Activated CD4-positive, alpha-beta memory T cell treated with anti-CD3 and anti-CD28 coated beads, Interleukin-2, amount 10 ng/mL, durations not matched to agents 7 days and 5 days (primary cell): ENCODE measurements at regions of chr15 and their contacts with region 1.

Region 1: GRCh38 chr15:85412956-85413854 is 32.8 kb downstream of the AKAP13 start:
- DNase-seq: peak; percentile 84
- H3K4me3 Mint-ChIP-seq: peak overlapping the region; percentile 53
- H3K27ac Mint-ChIP-seq: peak overlapping the region; percentile 86
- H3K4me1 Mint-ChIP-seq: peaks cover 67% of the 10 kb centered on the region
- H3K27me3 Mint-ChIP-seq: no peaks in the 10 kb centered on the region

Region 2: DNA sequence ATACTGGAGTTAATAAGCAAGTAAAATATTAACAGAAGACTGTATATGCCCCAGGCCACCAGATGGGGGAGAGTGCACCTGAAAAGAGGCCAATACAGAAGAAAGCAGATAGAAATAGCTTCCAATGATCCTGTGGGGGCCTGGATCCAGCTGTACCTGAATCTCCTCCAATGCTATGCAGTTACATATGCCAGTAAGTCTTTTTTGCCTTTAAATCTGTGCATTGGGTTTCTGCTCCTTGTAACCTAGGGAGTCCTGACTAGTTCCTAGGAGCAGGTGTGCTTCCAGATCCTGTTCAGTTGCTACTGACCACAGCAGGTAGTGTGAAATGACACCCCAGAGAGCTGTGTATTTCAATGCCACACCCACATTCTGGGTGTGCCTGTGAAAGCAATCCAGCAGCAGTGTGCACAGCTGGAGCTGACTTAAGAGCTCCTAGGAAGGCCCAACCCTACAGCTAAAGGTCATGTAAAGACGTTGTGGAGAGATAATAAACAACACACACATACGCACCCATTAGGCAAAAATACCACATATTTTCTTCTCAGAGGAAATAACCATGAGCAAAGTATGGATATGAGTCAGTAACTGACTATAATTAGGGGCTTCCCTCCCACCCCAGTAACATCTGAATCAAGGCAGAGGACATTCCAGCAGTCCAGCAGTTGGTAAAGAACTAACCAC is 95.0 kb before region 1 on chr15:
- CTCF ChIA-PET with region 1: interaction called, 39 read pairs
- POLR2A ChIA-PET with region 1: interaction called, 7 read pairs
- DNase-seq: peak; percentile 58
- H3K4me3 Mint-ChIP-seq: peak overlapping the region; percentile 3
- H3K27ac Mint-ChIP-seq: peak overlapping the region; percentile 82
- H3K4me1 Mint-ChIP-seq: peaks cover 57% of the 10 kb centered on the region
- H3K27me3 Mint-ChIP-seq: no peaks in the 10 kb centered on the region

Region 3: DNA sequence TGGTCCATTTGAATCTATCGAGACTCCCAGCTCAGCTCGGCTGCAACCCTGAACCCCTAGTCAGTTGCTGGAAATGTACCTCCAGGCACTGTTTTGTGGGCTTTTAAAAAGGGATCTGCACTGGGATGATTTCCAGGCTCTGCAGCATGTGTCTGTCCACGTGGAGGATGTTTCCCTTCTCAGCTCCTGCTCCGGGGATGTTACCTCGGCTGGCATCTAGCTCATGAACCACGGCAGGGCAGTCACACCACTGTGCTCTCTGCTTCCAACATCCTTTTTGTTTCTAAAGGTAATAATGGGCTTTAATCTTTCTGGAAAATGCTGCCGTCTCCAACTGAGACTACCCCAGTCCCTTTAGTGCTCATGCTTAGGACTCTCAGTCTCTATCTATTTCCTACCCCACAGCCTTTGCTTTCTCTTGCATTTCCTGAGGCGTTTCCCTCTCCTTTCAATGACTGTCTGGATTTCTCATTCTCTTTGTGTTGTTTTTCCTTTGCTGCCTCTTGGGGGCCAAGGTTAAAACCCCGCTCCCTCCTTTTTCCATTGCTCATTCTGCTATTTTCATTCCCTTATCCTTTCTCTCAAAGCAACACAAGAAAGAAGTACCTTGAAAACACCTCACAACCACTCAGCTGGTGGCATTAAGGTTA is 75.7 kb before region 1 on chr15:
- CTCF ChIA-PET with region 1: interaction called, 74 read pairs
- POLR2A ChIA-PET with region 1: interaction called, 3 read pairs
- DNase-seq: no peak
- H3K4me3 Mint-ChIP-seq: no peak overlapping the region
- H3K27ac Mint-ChIP-seq: no peak overlapping the region
- H3K4me1 Mint-ChIP-seq: peaks cover 3% of the 10 kb centered on the region
- H3K27me3 Mint-ChIP-seq: no peaks in the 10 kb centered on the region

Region 4: GRCh38 chr15:85402195-85402881 is 10.9 kb before region 1 on chr15:
- CTCF ChIA-PET with region 1: interaction called, 38 read pairs
- POLR2A ChIA-PET with region 1: interaction called, 14 read pairs
- DNase-seq: no peak
- H3K4me3 Mint-ChIP-seq: no peak overlapping the region
- H3K27ac Mint-ChIP-seq: no peak overlapping the region
- H3K4me1 Mint-ChIP-seq: peaks cover 58% of the 10 kb centered on the region
- H3K27me3 Mint-ChIP-seq: no peaks in the 10 kb centered on the region

Region 5: DNA sequence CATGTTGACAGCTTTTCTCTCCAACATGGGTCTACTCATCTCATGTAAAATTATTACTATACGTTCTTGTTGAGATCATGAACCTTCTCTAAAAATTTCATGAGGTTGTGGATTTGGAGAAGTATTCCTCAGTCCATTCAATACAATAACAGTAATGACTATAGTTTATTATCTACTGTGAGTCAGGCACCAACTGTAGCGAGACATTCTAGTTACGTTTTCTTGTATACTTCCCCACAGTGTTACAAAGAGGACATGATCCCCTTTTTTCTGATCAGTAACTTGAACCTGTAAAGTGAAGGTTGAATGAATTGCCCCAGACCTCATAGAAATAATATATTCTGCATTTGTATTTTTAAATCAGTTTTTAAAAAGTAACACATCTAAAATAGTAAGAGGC is 43.6 kb after region 1 on chr15:
- CTCF ChIA-PET with region 1: no interaction called
- POLR2A ChIA-PET with region 1: no interaction called
- DNase-seq: no peak
- H3K4me3 Mint-ChIP-seq: no peak overlapping the region
- H3K27ac Mint-ChIP-seq: no peak overlapping the region
- H3K4me1 Mint-ChIP-seq: peaks cover 10% of the 10 kb centered on the region
- H3K27me3 Mint-ChIP-seq: no peaks in the 10 kb centered on the region